ENCODE measurements at regions of chr13 and their contacts with region 1.

Region 1: GRCh38 chr13:97235549-97236231 is 13.6 kb downstream of the MBNL2 start:
- DNase-seq: no peak
- ATAC-seq: no peak
- H3K4me3 ChIP-seq: no peak overlapping the region
- H3K27ac ChIP-seq: no peak overlapping the region
- H3K4me1 ChIP-seq: peaks cover 30% of the 10 kb centered on the region
- H3K27me3 ChIP-seq: no peaks in the 10 kb centered on the region
- CTCF ChIP-seq: no peak
- POLR2A ChIP-seq: no peak
- RAD21 ChIP-seq: no peak

Region 2: GRCh38 chr13:97339019-97339987 is 103.6 kb after region 1 on chr13:
- CTCF ChIA-PET with region 1: no interaction called
- POLR2A ChIA-PET with region 1: interaction called, 18 read pairs
- dilution Hi-C with region 1: no loop called
- in situ Hi-C with region 1: loop called (anchors 10 kb)
- intact Hi-C with region 1: no loop called
- DNase-seq: peak; percentile 98
- ATAC-seq: peak; percentile 88
- H3K4me3 ChIP-seq: no peak overlapping the region; the same call in 1 of the 2 replicates
- H3K27ac ChIP-seq: peak overlapping the region; percentile 86
- H3K4me1 ChIP-seq: peaks cover 14% of the 10 kb centered on the region
- H3K27me3 ChIP-seq: no peaks in the 10 kb centered on the region
- CTCF ChIP-seq: no peak
- POLR2A ChIP-seq: no peak
- RAD21 ChIP-seq: no peak

Region 3: GRCh38 chr13:97344265-97345175 is 108.8 kb after region 1 on chr13:
- CTCF ChIA-PET with region 1: no interaction called
- POLR2A ChIA-PET with region 1: interaction called, 18 read pairs
- dilution Hi-C with region 1: no loop called
- in situ Hi-C with region 1: loop called (anchors 10 kb)
- intact Hi-C with region 1: no loop called
- DNase-seq: peak; percentile 61
- ATAC-seq: peak; percentile 75
- H3K4me3 ChIP-seq: no peak overlapping the region
- H3K27ac ChIP-seq: 0 out of 2 replicates have a peak overlapping the region, but pooled peaks have one; percentile 33
- H3K4me1 ChIP-seq: peaks cover 10% of the 10 kb centered on the region
- H3K27me3 ChIP-seq: no peaks in the 10 kb centered on the region
- CTCF ChIP-seq: peak; percentile 68
- POLR2A ChIP-seq: no peak
- RAD21 ChIP-seq: peak; percentile 75

Region 4: DNA sequence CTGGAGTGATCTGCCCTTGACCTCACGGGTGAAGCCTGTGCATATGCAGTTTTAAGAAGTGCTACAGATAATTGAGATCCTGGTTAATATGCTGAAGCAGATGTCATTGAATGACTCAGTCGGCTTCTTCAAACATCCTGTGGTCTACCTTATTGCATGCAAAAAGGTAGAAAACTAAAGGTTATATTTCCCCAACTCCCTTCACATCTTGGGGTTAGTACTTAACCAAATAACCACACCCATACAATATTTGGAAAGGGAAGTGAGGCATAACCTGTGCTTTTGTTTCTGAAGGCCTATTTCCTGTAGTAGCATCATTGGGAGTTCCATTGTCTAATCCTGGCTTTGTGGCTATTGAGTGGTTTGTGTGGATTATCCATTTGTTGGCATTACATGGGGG is 256.6 kb after region 1 on chr13:
- CTCF ChIA-PET with region 1: no interaction called
- POLR2A ChIA-PET with region 1: interaction called, 23 read pairs
- dilution Hi-C with region 1: no loop called
- in situ Hi-C with region 1: no loop called
- intact Hi-C with region 1: no loop called
- DNase-seq: no peak
- ATAC-seq: no peak
- H3K4me3 ChIP-seq: no peak overlapping the region
- H3K27ac ChIP-seq: no peak overlapping the region
- H3K4me1 ChIP-seq: no peaks in the 10 kb centered on the region
- H3K27me3 ChIP-seq: no peaks in the 10 kb centered on the region
- CTCF ChIP-seq: no peak
- POLR2A ChIP-seq: no peak
- RAD21 ChIP-seq: no peak